Stomach (tissue), 19 donors: ENCODE measurements at regions of chr3 and their contacts with region 1.

Region 1: GRCh38 chr3:197002701-197003454 is 26.7 kb downstream of the MELTF start:
- DNase-seq: peak; percentile 92 to 93
- H3K4me3 ChIP-seq: peak overlapping the region; percentile 58 to 61 (median 60)
- H3K27ac ChIP-seq: peak overlapping the region; percentile 73 to 89 (median 82)
- H3K4me1 ChIP-seq: peaks cover 4 to 19% (median 18%) of the 10 kb centered on the region in 4 donors
- H3K27me3 ChIP-seq: no peaks in the 10 kb centered on the region
- CTCF ChIP-seq: peak in 4 of 7 experiments; percentile 29 to 92 (median 74)
- EP300 ChIP-seq: no peak
- POLR2A ChIP-seq: no peak

Region 2: DNA sequence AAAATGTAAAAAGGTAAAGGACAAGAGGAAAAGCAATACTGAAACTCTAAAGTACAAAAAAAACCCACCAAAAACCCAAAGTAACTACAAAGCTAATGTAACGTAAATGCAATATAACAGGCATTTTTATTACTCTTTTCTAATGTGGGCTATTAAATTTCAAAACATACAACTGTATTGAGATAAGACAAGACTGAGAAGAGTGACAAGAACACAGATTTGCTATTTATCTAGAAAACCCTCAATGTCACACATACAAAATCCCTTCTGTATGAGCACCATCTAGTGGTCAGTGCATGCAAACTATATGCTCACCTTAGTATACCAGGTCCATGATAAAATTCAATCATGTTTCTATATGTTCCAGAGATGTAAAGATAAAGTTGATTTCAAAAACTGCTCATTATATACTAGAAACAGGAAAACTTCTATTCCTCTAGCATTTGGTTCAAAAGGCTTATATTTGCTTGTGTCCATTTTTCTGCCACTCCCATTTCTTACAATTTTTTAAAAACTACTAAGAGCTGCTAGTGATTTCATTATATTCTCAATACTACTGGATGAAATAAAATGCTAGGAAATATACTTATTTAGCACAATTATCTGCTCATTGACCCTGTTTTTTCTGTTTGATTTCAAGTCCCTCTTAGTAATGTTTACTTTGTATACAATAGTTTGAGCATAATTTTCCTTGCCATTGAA is 184.2 kb after region 1 on chr3:
- intact Hi-C with region 1: loop called (anchors 10 kb)
- DNase-seq: peak in 1 of 2 donors; percentile 82
- H3K4me3 ChIP-seq: no peak overlapping the region
- H3K27ac ChIP-seq: no peak overlapping the region
- H3K4me1 ChIP-seq: peaks cover 0 to 29% (median 13%) of the 10 kb centered on the region in 4 donors
- H3K27me3 ChIP-seq: no peaks in the 10 kb centered on the region
- CTCF ChIP-seq: peak in 5 of 7 experiments; percentile 60 to 87 (median 71)
- EP300 ChIP-seq: no peak
- POLR2A ChIP-seq: no peak

Region 3: DNA sequence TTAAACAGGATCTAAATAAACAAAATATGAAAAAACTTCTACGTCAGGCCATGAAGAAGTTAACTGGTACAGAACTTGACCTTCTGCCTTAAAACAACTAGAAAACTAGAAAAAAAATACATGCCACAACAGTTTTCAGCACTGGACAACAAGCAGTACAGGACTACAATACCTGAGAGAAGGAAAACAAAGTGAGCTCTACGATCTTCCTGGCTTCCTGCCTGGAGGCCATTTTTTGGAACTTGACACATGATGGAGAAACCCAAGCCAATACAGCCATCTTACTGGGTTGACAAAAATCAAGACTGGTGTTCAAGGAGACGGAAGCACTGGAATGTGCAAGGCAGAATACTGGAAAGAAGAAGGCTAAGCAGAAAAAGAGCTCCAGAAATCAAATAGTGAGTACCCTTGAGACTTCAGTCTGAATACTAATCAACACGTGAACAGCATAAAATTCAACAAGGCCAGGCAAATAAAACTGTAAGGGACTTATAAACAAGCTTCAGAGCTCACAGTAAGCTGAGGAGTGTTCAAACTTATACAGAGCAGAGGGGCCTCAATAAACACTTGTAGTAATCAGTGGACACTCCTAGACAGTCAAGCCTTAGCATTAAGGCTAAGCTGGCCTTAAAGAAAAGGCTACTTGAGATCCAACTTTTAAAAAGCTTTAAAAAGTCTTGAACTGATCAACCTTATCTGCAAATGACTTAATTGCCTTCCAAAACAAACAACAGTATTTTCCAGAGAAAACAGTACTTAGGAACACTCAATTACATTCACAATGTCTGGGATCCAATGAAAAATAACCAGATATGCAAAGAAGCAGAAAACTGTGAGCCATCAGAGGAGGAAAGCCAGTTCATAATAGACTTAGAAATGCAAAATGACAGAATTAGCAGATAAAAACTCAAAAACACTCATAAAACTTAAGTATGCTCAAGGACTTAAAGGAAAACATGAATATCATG is 232.4 kb after region 1 on chr3:
- intact Hi-C with region 1: no loop called
- DNase-seq: no peak
- H3K4me3 ChIP-seq: no peak overlapping the region
- H3K27ac ChIP-seq: no peak overlapping the region
- H3K4me1 ChIP-seq: peaks cover 0 to 16% (median 12%) of the 10 kb centered on the region in 4 donors
- H3K27me3 ChIP-seq: no peaks in the 10 kb centered on the region
- CTCF ChIP-seq: no peak
- EP300 ChIP-seq: no peak
- POLR2A ChIP-seq: no peak